CD8-positive, alpha-beta T cell (primary cell): ENCODE measurements at regions of chr1 and their contacts with region 1.

Region 1: GRCh38 chr1:38859561-38860453 is at the start of gene RRAGC:
- DNase-seq: peak; percentile 95 to 99 (median 98)
- ATAC-seq: peak; percentile 96
- H3K4me3 ChIP-seq: peak within 1 kb of the TSS; percentile 79 to 85
- H3K4me3 Mint-ChIP-seq: peak within 1 kb of the TSS; percentile 90
- H3K27ac ChIP-seq: peak within 1 kb of the TSS; percentile 48 to 68
- H3K27ac Mint-ChIP-seq: peak within 1 kb of the TSS; percentile 86
- H3K4me1 ChIP-seq: peaks cover 22% of the 10 kb centered on the region
- H3K4me1 Mint-ChIP-seq: peaks cover 67% of the 10 kb centered on the region
- H3K27me3 ChIP-seq: no peaks in the 10 kb centered on the region
- H3K27me3 Mint-ChIP-seq: no peaks in the 10 kb centered on the region
- CTCF ChIP-seq: no peak
- total RNA-seq, gene RRAGC: 13.6 to 14.7 TPM

Region 2: DNA sequence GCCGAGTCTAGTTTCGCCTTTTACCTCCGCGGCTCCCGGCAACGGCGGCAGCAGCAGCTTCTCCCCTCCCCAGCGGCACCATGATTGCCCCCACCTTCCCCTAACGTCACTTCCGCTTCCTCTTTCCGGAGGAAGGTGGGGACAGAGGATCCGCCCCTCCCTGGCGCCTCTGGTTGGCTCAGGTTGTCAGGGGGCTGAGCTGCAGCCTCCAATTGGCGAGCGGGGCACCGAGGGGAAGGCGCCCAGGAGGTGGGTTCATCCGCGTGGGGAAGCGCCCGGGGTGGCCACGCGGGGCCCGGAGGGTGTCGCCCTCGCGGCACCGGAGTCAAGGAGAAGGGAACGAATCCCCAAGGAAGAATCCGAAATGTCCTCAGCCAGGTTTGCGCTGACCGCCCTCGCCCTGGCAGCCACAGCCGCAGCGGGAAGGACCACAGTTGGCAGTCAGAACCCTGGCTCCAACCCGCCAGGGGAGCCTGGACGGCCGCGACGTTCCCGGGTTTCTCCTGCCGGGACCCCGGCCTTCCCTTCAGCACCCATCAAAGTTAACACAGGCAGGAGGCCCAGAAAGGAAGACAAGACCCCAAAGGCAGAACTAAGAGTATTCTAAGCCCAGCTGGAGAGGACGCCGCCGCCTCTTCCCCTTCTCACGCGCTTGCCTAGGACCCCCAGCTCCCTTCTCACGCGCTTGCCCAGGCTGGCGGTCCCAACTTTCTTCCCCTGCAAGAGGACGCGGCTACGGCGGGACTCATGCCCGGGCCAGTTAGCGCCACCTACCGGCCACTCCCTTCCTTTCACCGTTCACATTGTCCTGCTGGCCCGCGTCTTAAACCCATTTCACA is 1000.1 kb before region 1 on chr1 and contains the start of gene MTF1:
- CTCF ChIA-PET with region 1: no interaction called
- POLR2A ChIA-PET with region 1: no interaction called
- intact Hi-C with region 1: loop called in 1 of 2 experiments (anchors 1 kb)
- DNase-seq: peak; percentile 91 to 99 (median 96)
- ATAC-seq: peak; percentile 99
- H3K4me3 ChIP-seq: peak within 1 kb of the TSS; percentile 88 to 99
- H3K4me3 Mint-ChIP-seq: peak within 1 kb of the TSS; percentile 98
- H3K27ac ChIP-seq: peak within 1 kb of the TSS; percentile 94 to 96
- H3K27ac Mint-ChIP-seq: peak within 1 kb of the TSS; percentile 94
- H3K4me1 ChIP-seq: peaks cover 19% of the 10 kb centered on the region
- H3K4me1 Mint-ChIP-seq: peaks cover 34% of the 10 kb centered on the region
- H3K27me3 ChIP-seq: no peaks in the 10 kb centered on the region
- H3K27me3 Mint-ChIP-seq: no peaks in the 10 kb centered on the region
- CTCF ChIP-seq: peak; percentile 79
- total RNA-seq, gene MTF1: 30.3 to 30.8 TPM

Region 3: DNA sequence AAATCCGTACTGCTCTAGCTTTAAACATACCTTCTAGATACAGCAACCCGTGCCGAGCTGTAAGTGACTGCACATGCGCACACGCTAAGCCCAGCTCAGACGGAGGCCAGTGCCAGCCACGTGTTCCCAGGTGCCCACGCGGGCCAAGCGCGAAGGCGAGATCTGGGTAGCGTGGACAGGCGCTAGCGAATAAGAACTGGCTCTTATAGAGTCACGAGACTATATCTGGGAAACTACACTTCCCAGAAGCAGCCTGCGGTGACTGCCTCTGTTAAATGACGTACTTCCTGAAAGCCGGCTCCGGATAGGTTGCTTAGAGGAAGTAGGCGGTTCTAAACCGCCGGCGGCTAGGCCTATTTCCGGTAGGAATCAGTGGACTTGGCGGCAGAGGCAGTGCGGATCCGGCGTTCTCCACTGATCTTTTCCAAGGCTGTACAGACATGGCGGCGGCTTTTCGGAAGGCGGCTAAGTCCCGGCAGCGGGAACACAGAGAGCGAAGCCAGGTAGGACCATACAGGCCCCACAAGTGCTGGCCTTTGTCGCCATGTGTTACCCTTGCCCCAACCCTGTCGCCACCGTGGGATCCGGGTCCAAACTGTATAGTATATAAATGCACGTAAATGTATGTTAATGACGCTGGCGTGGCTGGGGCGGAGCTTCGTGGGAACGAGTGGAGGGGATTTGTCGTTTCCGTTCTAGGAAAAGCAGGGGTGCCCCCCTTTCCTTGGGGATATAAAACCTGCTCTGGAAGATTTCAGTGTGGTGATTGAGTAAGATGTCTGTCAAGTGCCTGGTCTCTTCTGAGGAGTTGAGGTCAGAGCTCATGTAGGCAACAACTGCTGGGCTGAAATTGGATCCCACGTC is 847.2 kb before region 1 on chr1 and contains the start of gene UTP11:
- CTCF ChIA-PET with region 1: no interaction called
- POLR2A ChIA-PET with region 1: no interaction called
- intact Hi-C with region 1: loop called in 1 of 2 experiments (anchors 10 kb)
- DNase-seq: peak; percentile 80 to 97 (median 88)
- ATAC-seq: peak; percentile 86
- H3K4me3 ChIP-seq: peak within 1 kb of the TSS; percentile 66 to 94
- H3K4me3 Mint-ChIP-seq: peak within 1 kb of the TSS; percentile 99
- H3K27ac ChIP-seq: peak within 1 kb of the TSS; percentile 74 to 94
- H3K27ac Mint-ChIP-seq: peak within 1 kb of the TSS; percentile 99
- H3K4me1 ChIP-seq: peaks cover 40% of the 10 kb centered on the region
- H3K4me1 Mint-ChIP-seq: peaks cover 57% of the 10 kb centered on the region
- H3K27me3 ChIP-seq: no peaks in the 10 kb centered on the region
- H3K27me3 Mint-ChIP-seq: no peaks in the 10 kb centered on the region
- CTCF ChIP-seq: no peak
- total RNA-seq, gene UTP11: 12.8 to 14.0 TPM

Region 4: DNA sequence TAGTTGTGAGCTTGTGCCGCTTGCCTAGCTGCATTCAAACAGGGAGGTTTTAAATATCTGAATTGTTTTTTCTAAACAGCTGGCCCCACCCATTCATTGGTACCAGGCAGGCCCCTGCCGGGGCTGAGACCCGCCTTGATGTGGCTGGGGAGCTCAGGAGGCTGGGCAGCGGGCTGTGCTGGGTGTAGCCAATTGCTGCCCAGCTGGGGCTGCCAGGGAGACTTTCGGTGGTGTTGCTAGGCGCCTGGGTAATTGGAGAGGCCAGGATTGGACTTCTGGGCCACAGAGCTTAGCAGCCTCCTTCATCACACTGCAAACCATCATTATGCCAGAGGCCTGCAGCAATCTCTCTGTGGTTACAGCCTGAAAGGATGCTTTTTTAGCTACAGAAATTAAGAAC is 69.7 kb after region 1 on chr1:
- CTCF ChIA-PET with region 1: no interaction called
- POLR2A ChIA-PET with region 1: no interaction called
- intact Hi-C with region 1: no loop called
- DNase-seq: no peak
- ATAC-seq: no peak
- H3K4me3 ChIP-seq: no peak overlapping the region
- H3K4me3 Mint-ChIP-seq: no peak overlapping the region
- H3K27ac ChIP-seq: no peak overlapping the region
- H3K27ac Mint-ChIP-seq: no peak overlapping the region
- H3K4me1 ChIP-seq: no peaks in the 10 kb centered on the region
- H3K4me1 Mint-ChIP-seq: no peaks in the 10 kb centered on the region
- H3K27me3 ChIP-seq: peaks cover 0 to 6% of the 10 kb centered on the region in 2 experiments
- H3K27me3 Mint-ChIP-seq: peaks cover 6% of the 10 kb centered on the region
- CTCF ChIP-seq: no peak

Region 5: DNA sequence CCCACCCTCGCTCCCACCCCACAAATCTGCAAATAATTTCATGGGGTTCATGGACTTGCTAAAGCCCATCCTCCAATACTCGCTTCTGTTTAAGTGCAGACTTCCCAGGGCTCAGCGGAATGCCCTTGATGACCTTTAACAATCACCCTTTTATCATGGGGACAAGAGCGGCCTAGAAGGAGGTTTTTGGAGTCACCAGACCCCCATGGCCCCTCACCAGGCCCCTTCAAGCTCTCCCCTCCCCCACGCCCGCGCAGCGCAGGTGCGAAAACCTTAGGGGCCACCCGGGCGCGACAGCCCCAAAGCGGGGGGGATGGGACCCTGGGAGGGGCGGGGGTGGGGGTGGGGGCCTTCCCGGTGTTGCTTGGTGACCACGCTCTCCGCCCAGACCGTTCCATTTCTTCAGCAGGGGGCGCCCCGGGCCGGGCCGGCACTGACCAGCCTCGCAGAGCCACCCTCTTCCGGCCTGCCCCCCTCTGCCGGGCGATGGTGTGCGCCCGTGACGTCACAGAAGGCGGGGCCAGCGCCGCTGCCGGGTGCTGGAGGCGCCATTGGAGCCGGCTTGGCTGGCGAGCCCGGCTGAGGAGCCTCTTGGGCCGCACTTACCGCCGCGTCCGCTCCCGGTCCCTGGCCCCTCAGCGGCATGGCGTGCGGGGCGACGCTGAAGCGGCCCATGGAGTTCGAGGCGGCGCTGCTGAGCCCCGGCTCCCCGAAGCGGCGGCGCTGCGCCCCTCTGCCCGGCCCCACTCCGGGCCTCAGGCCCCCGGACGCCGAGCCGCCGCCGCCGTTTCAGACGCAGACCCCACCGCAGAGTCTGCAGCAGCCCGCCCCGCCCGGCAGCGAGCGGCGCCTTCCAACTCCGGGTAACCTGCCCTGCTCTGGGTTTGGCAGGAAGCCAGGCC is 131.2 kb after region 1 on chr1 and contains the start of gene AKIRIN1:
- CTCF ChIA-PET with region 1: no interaction called
- POLR2A ChIA-PET with region 1: no interaction called
- intact Hi-C with region 1: loop called (anchors 1 to 2 kb)
- DNase-seq: peak; percentile 81 to 98 (median 94)
- ATAC-seq: peak; percentile 90
- H3K4me3 ChIP-seq: peak within 1 kb of the TSS; percentile 53 to 93
- H3K4me3 Mint-ChIP-seq: peak within 1 kb of the TSS; percentile 87
- H3K27ac ChIP-seq: peak within 1 kb of the TSS; percentile 82 to 84
- H3K27ac Mint-ChIP-seq: peak within 1 kb of the TSS; percentile 89
- H3K4me1 ChIP-seq: peaks cover 40% of the 10 kb centered on the region
- H3K4me1 Mint-ChIP-seq: peaks cover 38% of the 10 kb centered on the region
- H3K27me3 ChIP-seq: no peaks in the 10 kb centered on the region
- H3K27me3 Mint-ChIP-seq: no peaks in the 10 kb centered on the region
- CTCF ChIP-seq: no peak
- total RNA-seq, gene AKIRIN1: 122 to 123 TPM

Region 6: GRCh38 chr1:39091845-39092645 is 232.2 kb after region 1 on chr1:
- CTCF ChIA-PET with region 1: no interaction called
- POLR2A ChIA-PET with region 1: no interaction called
- intact Hi-C with region 1: loop called (anchors 1 to 5 kb)
- DNase-seq: peak in 7 of 9 experiments; percentile 13 to 74 (median 67)
- ATAC-seq: peak; percentile 75
- H3K4me3 ChIP-seq: no peak overlapping the region
- H3K4me3 Mint-ChIP-seq: no peak overlapping the region
- H3K27ac ChIP-seq: no peak overlapping the region
- H3K27ac Mint-ChIP-seq: no peak overlapping the region
- H3K4me1 ChIP-seq: no peaks in the 10 kb centered on the region
- H3K4me1 Mint-ChIP-seq: peaks cover 8% of the 10 kb centered on the region
- H3K27me3 ChIP-seq: no peaks in the 10 kb centered on the region
- H3K27me3 Mint-ChIP-seq: peaks cover 7% of the 10 kb centered on the region
- CTCF ChIP-seq: peak; percentile 69

Region 7: DNA sequence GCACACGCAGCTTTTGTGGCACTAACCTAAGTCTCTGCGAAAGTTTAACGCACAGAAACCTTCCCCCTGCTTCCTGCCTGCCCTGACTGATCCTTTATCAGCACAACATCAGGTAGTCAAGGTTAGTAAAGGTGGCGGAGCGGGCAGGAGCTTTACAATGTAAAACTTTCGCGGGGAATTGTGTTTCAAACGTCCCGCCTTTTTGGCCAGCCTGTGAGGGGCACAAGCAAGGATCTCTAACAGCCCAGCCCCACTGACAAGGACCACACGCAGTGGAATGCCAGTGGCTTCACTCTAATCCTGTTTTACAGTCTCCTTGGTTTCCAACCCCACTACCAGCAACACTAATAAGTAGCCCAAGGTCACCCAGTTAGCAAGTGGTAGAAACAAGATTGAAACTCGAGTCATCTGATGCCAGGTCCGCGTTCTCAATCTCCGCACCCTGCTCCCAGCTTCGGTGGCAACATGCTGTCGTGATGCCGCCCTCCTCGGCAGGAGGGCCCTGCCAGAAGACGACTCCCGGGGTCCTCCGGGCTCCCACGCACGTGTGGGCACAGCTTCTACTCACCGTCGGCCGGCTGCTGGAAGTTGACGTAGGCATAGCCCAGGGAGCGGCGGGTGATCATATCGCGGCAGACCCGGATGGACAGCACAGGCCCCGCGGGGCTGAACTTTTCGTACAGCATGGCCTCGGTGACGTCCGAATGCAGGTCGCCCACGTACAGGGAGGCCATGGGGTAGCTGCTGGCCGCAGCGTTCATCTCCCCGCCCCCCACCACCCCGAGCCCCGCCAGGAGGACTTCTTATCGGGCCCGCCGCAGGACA is 715.6 kb after region 1 on chr1:
- CTCF ChIA-PET with region 1: no interaction called
- POLR2A ChIA-PET with region 1: no interaction called
- intact Hi-C with region 1: loop called in 1 of 2 experiments (anchors 10 kb)
- DNase-seq: peak; percentile 16 to 78 (median 57)
- ATAC-seq: peak; percentile 65
- H3K4me3 ChIP-seq: peak overlapping the region; percentile 64 to 75
- H3K4me3 Mint-ChIP-seq: peak overlapping the region; percentile 93
- H3K27ac ChIP-seq: peak overlapping the region; percentile 68 to 72
- H3K27ac Mint-ChIP-seq: peak overlapping the region; percentile 92
- H3K4me1 ChIP-seq: peaks cover 41% of the 10 kb centered on the region
- H3K4me1 Mint-ChIP-seq: peaks cover 44% of the 10 kb centered on the region
- H3K27me3 ChIP-seq: no peaks in the 10 kb centered on the region
- H3K27me3 Mint-ChIP-seq: no peaks in the 10 kb centered on the region
- CTCF ChIP-seq: no peak